Activated naive CD4-positive, alpha-beta T cell treated with anti-CD3 and anti-CD28 coated beads for 36 hours (primary cell): ENCODE measurements at regions of chr5 and their contacts with region 1.

Region 1: DNA sequence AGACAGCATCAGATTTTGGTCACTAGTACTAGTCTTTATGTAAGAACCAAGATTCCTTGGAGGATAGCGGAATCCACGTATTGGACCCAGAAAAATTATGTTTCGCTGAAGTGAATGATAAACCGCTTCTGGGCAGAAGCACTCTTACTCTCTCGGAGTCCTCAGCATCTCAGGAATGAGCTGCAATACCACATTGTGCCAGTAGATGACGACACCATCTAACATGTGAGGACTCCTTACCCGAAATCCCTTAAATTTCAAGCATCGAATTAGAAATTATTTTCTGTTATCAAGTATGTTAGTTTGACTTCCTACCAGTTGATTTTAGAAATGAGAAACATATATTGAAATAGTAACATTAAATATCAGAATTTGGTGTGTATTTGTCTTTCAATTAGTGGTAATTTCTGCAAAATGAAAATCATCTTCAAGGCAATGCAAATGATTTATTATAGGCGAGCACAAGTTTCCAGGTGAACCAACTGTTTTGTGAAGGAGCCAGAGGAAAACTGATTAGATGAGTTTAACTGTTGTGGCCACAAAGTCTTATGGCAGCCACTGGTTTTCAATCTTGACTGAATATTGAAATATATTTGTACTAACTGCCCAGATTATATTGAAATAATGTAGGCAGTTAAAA is 66.0 kb upstream of the CAMK4 start:
- DNase-seq: peak; percentile 93
- H3K4me3 Mint-ChIP-seq: no peak overlapping the region
- H3K27ac Mint-ChIP-seq: no peak overlapping the region
- H3K4me1 Mint-ChIP-seq: peaks cover 7% of the 10 kb centered on the region
- H3K27me3 Mint-ChIP-seq: no peaks in the 10 kb centered on the region

Region 2: DNA sequence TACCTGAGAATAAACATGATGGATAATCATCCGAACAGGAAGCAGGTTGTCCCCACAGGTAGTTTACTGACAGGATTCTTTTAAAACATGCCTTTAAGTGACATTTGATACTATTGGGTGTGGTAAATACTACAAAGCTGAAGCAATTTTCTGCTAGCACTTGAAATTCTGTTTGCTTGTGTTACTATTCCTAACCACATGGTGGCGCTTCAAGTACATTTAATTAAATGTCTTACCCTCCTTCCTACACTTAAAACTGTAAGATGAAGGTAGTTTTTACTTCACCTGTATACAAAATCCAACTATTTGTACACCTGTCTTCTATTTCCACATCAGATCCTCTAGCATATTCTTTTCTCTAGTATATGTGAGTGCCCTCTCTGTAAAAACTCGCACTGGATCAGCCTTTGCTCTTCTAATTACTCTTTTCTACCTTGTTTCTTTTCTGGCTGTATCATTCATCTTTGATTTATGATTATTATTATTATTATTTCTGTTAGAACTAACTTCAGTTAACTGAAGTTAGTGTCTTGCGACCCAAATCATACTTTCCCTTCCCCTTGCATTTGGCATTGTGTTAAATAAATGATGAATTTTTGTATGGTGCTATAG is 401.0 kb before region 1 on chr5:
- CTCF ChIA-PET with region 1: no interaction called
- intact Hi-C with region 1: loop called (anchors 2 kb)
- DNase-seq: peak; percentile 38
- H3K4me3 Mint-ChIP-seq: no peak overlapping the region
- H3K27ac Mint-ChIP-seq: no peak overlapping the region
- H3K4me1 Mint-ChIP-seq: peaks cover 26% of the 10 kb centered on the region
- H3K27me3 Mint-ChIP-seq: no peaks in the 10 kb centered on the region

Region 3: DNA sequence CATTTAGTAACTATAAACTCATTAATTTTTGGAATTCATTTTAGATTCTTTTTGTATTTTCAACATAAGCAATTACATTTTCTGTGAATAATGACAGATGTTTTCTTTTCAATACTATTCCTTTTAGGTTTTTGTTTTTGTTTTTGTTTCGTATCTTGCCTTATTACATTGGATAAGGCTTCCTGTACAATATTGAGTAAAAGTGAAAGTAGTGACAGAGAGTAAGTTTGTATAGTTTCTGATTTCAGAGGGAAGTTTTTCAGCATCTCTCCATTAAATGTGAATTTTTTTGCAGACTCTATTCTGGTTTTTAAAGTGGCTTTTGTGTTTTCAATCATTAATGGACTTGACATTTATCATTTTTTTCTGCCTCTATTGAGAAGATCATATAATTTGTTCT is 53.1 kb after region 1 on chr5:
- CTCF ChIA-PET with region 1: interaction called, 3 read pairs
- intact Hi-C with region 1: loop called (anchors 2 kb)
- DNase-seq: no peak
- H3K4me3 Mint-ChIP-seq: no peak overlapping the region
- H3K27ac Mint-ChIP-seq: no peak overlapping the region
- H3K4me1 Mint-ChIP-seq: peaks cover 42% of the 10 kb centered on the region
- H3K27me3 Mint-ChIP-seq: no peaks in the 10 kb centered on the region

Region 4: DNA sequence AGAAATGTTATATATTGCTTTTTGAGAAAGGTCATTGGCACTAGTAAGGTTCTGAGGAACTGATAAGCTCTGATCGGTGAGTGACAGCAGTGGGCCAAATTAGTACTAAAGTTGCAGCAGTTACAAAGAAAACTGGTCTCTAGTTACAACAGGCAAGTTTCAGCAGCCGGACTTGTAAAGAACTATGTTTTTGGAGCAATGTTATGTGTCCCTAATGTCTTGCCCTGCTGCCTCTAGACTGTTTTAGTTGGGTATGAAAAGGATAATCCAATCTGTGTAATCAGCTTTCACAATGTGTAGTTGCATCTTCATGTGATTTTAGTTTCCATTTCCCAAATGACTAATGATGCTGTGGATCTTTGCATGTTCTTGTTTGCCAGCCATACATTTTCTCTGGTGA is 179.5 kb after region 1 on chr5:
- CTCF ChIA-PET with region 1: interaction called, 7 read pairs
- intact Hi-C with region 1: loop called (anchors 5 kb)
- DNase-seq: peak; percentile 10
- H3K4me3 Mint-ChIP-seq: peak overlapping the region; percentile 11
- H3K27ac Mint-ChIP-seq: peak overlapping the region; percentile 78
- H3K4me1 Mint-ChIP-seq: peaks cover 74% of the 10 kb centered on the region
- H3K27me3 Mint-ChIP-seq: no peaks in the 10 kb centered on the region

Region 5: DNA sequence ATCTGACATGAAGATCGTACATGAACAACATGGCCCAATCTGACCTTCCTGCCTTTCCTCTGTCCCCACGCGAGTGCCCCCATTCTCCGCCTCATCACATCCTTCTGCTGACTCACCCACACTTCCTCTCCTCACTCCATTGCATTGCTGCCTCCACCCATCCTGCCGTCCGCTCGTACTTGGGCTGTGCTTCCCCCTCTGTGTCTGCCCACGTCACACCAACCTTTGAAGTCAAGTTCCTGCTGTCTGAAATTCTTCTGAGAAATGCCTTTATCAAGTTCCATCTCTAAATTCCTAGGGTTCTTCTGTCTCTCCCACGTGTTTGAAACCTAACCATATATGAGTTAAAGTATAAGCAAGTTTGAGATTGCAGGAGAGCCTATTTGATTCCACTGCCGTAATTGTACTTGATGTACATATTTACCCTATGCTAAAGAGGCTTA is 372.1 kb after region 1 on chr5:
- CTCF ChIA-PET with region 1: interaction called, 6 read pairs
- intact Hi-C with region 1: loop called (anchors 2 kb)
- DNase-seq: peak; percentile 92
- H3K4me3 Mint-ChIP-seq: peak overlapping the region; percentile 62
- H3K27ac Mint-ChIP-seq: peak overlapping the region; percentile 83
- H3K4me1 Mint-ChIP-seq: peaks cover 16% of the 10 kb centered on the region
- H3K27me3 Mint-ChIP-seq: no peaks in the 10 kb centered on the region

Region 6: DNA sequence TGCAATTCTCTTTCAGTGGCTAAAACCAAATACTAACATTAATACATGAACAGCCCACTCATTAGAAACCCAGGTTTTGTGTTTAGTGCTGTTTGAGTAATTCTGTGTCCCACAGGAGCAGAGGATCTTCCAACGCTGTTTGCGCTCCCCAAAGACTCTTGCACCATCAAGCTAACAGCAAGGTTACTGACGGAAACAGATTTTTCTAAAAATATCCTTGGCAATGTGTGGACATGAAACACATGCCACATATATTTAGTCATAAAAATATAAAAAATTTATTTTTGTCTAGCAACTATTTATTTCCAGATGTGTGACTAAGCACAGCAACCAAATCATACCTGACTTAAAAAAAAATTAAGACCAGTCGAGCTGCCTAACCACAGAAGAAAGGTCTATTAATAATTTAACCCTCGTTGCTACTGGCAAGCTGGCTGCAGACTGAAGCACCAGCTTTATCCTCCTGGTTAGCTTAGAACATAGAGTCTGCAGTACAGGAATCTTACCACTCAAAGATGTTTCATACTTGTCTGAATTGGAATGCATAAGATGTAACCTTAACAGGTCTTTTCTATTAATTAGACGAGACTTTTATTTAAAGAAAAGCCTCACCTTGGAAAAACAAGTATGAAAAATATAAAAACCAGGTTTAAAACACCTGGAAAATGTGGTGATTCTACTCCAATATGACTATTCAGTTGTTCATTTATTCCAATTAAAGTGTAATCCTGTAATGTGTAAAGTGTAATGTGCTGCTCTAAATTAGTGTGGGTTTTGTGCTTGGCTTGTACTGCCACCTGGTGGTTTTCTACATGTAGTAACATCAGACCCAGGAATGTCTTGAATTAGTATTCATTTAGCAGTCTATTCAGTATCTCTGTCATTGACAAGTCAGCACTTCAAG is 988.4 kb after region 1 on chr5:
- CTCF ChIA-PET with region 1: no interaction called
- intact Hi-C with region 1: loop called (anchors 1 kb)
- DNase-seq: peak; percentile 81
- H3K4me3 Mint-ChIP-seq: no peak overlapping the region
- H3K27ac Mint-ChIP-seq: no peak overlapping the region
- H3K4me1 Mint-ChIP-seq: no peaks in the 10 kb centered on the region
- H3K27me3 Mint-ChIP-seq: peaks cover 3% of the 10 kb centered on the region